Activated CD8-positive, alpha-beta T cell treated with anti-CD3 and anti-CD28 coated beads for 36 hours (primary cell): ENCODE measurements at regions of chr3 and their contacts with region 1.

Region 1: GRCh38 chr3:69120879-69121464 is 1.4 kb downstream of the LMOD3 start:
- DNase-seq: peak; percentile 93
- ATAC-seq: peak; percentile 96
- H3K4me3 Mint-ChIP-seq: no peak overlapping the region
- H3K27ac Mint-ChIP-seq: no peak overlapping the region
- H3K4me1 Mint-ChIP-seq: peaks cover 5% of the 10 kb centered on the region
- H3K27me3 Mint-ChIP-seq: no peaks in the 10 kb centered on the region
- CTCF ChIP-seq: peak; percentile 96

Region 2: DNA sequence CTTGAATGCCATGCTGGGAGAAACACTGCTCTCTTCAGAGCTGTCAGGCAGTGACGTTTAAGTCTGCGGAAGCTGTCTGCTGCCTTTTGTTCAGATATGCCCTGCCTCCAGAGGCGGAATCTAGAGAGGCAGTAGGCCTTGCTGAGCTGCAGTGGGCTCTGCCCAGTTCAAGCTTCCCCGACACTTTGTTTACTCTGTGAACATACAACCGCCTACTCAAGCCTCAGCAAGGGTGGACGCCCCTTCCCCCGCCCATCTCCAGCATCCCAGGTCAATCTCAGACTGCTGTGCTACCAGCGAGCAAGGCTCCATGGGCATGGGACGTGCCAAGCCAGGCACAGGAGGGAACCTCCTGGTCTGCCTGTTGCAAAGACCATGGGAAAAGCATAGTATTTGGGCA is 288.3 kb before region 1 on chr3:
- CTCF ChIA-PET with region 1: no interaction called
- POLR2A ChIA-PET with region 1: no interaction called
- intact Hi-C with region 1: no loop called
- DNase-seq: no peak
- ATAC-seq: no peak
- H3K4me3 Mint-ChIP-seq: no peak overlapping the region
- H3K27ac Mint-ChIP-seq: no peak overlapping the region
- H3K4me1 Mint-ChIP-seq: no peaks in the 10 kb centered on the region
- H3K27me3 Mint-ChIP-seq: peaks cover 1% of the 10 kb centered on the region
- CTCF ChIP-seq: no peak

Region 3: GRCh38 chr3:69084326-69085167 is 36.4 kb before region 1 on chr3 and contains the start of gene ARL6IP5:
- CTCF ChIA-PET with region 1: interaction called, 10 read pairs
- POLR2A ChIA-PET with region 1: interaction called, 3 read pairs
- intact Hi-C with region 1: no loop called
- DNase-seq: peak; percentile 97
- ATAC-seq: peak; percentile 54
- H3K4me3 Mint-ChIP-seq: peak within 1 kb of the TSS; percentile 99
- H3K27ac Mint-ChIP-seq: peak within 1 kb of the TSS; percentile 98
- H3K4me1 Mint-ChIP-seq: peaks cover 58% of the 10 kb centered on the region
- H3K27me3 Mint-ChIP-seq: no peaks in the 10 kb centered on the region
- CTCF ChIP-seq: no peak
- total RNA-seq, gene ARL6IP5: 72.7 to 74.2 TPM

Region 4: DNA sequence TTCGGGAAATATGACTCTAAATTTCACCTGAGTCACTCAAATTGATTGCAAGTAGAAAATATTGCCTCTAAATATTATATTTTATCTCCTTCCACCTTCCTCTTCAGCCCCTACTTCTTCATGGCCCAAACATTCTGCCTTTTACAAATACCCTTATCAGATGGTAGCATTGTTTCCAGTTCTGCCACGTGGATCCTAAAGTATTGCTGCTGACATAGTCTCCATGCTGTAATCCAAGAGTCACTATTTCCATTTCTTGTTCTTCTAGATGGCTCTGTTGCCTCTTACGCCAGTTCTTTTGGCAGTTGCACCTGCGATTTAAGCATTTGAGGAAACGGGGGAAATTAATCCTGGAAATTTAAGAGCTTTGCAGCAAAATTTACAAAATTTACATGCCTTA is 12.2 kb before region 1 on chr3:
- CTCF ChIA-PET with region 1: interaction called, 33 read pairs
- POLR2A ChIA-PET with region 1: interaction called, 3 read pairs
- intact Hi-C with region 1: no loop called
- DNase-seq: no peak
- ATAC-seq: no peak
- H3K4me3 Mint-ChIP-seq: no peak overlapping the region
- H3K27ac Mint-ChIP-seq: no peak overlapping the region
- H3K4me1 Mint-ChIP-seq: peaks cover 39% of the 10 kb centered on the region
- H3K27me3 Mint-ChIP-seq: no peaks in the 10 kb centered on the region
- CTCF ChIP-seq: no peak

Region 5: GRCh38 chr3:69144631-69145245 is 23.8 kb after region 1 on chr3:
- CTCF ChIA-PET with region 1: interaction called, 13 read pairs
- POLR2A ChIA-PET with region 1: no interaction called
- intact Hi-C with region 1: no loop called
- DNase-seq: no peak
- ATAC-seq: no peak
- H3K4me3 Mint-ChIP-seq: no peak overlapping the region
- H3K27ac Mint-ChIP-seq: no peak overlapping the region
- H3K4me1 Mint-ChIP-seq: no peaks in the 10 kb centered on the region
- H3K27me3 Mint-ChIP-seq: peaks cover 4% of the 10 kb centered on the region
- CTCF ChIP-seq: no peak

Region 6: GRCh38 chr3:69425261-69425660 is 304.3 kb after region 1 on chr3:
- CTCF ChIA-PET with region 1: interaction called, 7 read pairs
- POLR2A ChIA-PET with region 1: no interaction called
- intact Hi-C with region 1: loop called (anchors 10 kb)
- DNase-seq: peak; percentile 54
- ATAC-seq: peak; percentile 65
- H3K4me3 Mint-ChIP-seq: no peak overlapping the region
- H3K27ac Mint-ChIP-seq: no peak overlapping the region
- H3K4me1 Mint-ChIP-seq: peaks cover 2% of the 10 kb centered on the region
- H3K27me3 Mint-ChIP-seq: peaks cover 2% of the 10 kb centered on the region
- CTCF ChIP-seq: peak; percentile 24